Vagina (tissue), 2 donors: ENCODE measurements at regions of chr16 and their contacts with region 1.

Region 1: DNA sequence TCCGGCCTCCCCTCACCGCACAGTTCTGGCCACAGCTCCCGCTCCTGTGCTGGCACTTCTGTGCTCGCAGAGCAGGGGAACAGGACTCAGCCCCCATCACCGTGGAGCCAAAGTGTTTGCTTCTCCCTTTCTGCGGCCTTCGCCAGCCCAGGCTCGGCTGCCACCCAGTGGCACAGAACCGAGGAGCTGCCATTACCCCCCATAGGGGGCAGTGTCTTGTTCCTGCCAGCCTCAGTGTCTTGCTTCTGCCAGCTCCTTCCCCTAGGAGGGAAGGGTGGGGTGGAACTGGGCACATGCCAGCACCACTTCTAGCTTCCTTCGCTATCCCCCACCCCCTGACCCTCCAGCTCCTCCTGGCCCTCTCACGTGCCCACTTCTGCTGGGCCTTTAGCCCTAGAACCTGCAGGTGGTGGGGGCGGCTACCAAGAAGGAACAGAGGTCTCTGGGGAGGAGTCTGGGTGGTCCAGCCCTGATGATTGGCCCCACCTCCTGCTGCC is 645 bp upstream of the ELMO3 start:
- DNase-seq: no peak
- H3K4me3 ChIP-seq: no peak overlapping the region
- H3K27ac ChIP-seq: peak overlapping the region; percentile 38
- H3K4me1 ChIP-seq: peaks cover 24% of the 10 kb centered on the region
- H3K27me3 ChIP-seq: no peaks in the 10 kb centered on the region
- CTCF ChIP-seq: peak in 2 of 3 experiments; percentile 22 to 30
- POLR2A ChIP-seq: no peak

Region 2: GRCh38 chr16:66315210-66315825 is 883.0 kb before region 1 on chr16:
- intact Hi-C with region 1: loop called (anchors 5 kb)
- DNase-seq: no peak
- H3K4me3 ChIP-seq: no peak overlapping the region
- H3K27ac ChIP-seq: no peak overlapping the region
- H3K4me1 ChIP-seq: peaks cover 9% of the 10 kb centered on the region
- H3K27me3 ChIP-seq: no peaks in the 10 kb centered on the region
- CTCF ChIP-seq: peak; percentile 79 to 86 (median 85)
- POLR2A ChIP-seq: no peak